ENCODE measurements at regions of chr6 and their contacts with region 1.

Region 1: GRCh38 chr6:147506704-147507114 is 1.8 kb upstream of the SAMD5 start:
- DNase-seq: peak; percentile 76
- H3K4me3 ChIP-seq: peak overlapping the region; percentile 38 to 58 (median 56)
- H3K27ac ChIP-seq: no peak overlapping the region
- H3K4me1 ChIP-seq: peaks cover 0 to 30% (median 23%) of the 10 kb centered on the region in 4 donors
- H3K27me3 ChIP-seq: peaks cover 0 to 19% (median 0%) of the 10 kb centered on the region in 3 donors
- CTCF ChIP-seq: peak; percentile 59 to 84 (median 78)
- EP300 ChIP-seq: no peak
- POLR2A ChIP-seq: no peak

Region 2: DNA sequence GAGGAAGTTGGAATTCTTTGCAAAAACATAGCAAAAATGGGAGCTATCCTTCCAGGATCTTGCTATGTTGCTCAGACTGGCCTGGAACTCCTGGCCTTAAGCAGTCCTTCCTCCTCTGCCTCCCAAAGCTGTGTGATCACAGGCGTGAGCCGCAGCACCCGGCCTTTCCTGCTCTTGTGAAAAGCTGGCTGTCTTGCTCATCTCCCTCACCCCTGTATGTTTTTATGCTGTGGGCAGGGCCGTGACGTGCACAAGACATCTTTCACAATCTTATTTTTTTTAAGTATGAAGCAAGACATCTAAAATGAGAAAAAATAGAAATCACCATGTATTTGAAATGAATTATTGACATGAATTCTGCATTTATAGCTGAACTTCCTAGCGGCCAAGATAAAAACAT is 112.2 kb after region 1 on chr6:
- intact Hi-C with region 1: no loop called
- DNase-seq: no peak
- H3K4me3 ChIP-seq: no peak overlapping the region
- H3K27ac ChIP-seq: no peak overlapping the region
- H3K4me1 ChIP-seq: peaks cover 0 to 7% (median 0%) of the 10 kb centered on the region in 4 donors
- H3K27me3 ChIP-seq: no peaks in the 10 kb centered on the region
- CTCF ChIP-seq: no peak
- EP300 ChIP-seq: no peak
- POLR2A ChIP-seq: no peak

Region 3: GRCh38 chr6:147950623-147950987 is 443.9 kb after region 1 on chr6:
- intact Hi-C with region 1: loop called (anchors 10 kb)
- DNase-seq: no peak
- H3K4me3 ChIP-seq: no peak overlapping the region
- H3K27ac ChIP-seq: peak overlapping the region in 3 of 4 donors; percentile 23 to 39 (median 25)
- H3K4me1 ChIP-seq: peaks cover 0 to 19% (median 5%) of the 10 kb centered on the region in 4 donors
- H3K27me3 ChIP-seq: no peaks in the 10 kb centered on the region
- CTCF ChIP-seq: no peak
- EP300 ChIP-seq: no peak
- POLR2A ChIP-seq: no peak

Region 4: GRCh38 chr6:148166339-148166968 is 659.7 kb after region 1 on chr6:
- intact Hi-C with region 1: loop called (anchors 1 kb)
- DNase-seq: no peak
- H3K4me3 ChIP-seq: no peak overlapping the region
- H3K27ac ChIP-seq: no peak overlapping the region
- H3K4me1 ChIP-seq: no peaks in the 10 kb centered on the region
- H3K27me3 ChIP-seq: no peaks in the 10 kb centered on the region
- CTCF ChIP-seq: peak; percentile 24 to 74 (median 56)
- EP300 ChIP-seq: no peak
- POLR2A ChIP-seq: no peak

Region 5: DNA sequence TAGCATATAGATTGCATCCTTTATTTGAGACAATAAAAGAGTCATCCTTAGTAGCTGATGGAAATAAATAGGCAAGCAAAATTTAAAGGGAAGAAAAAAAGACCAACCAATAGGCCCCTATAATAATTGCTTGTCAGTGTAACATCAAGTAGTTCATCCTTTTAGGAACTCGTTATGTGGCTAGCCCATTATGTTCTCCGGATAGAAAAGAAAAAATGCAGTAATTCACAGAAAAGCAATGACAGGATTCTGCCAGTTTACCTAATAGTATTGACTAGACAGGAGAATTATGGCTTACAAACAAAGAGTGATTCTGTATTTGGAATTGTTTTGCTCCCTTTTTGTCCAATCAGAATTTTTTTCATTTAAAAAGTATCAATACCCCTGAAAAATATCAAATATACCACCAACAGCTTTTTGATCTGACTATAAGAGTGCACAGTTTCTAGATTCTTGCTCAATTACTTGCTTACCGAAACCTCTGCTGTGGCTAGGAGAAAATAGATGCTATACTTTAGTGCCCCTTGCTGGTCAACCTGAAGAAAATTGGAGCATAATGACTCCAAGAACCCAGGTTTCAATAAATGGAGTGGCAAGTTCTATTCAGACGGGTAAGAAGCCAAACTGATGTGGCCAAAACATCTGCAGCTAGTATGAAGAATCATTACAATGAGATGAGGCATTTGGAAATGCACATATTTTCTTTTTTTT is 744.4 kb after region 1 on chr6:
- intact Hi-C with region 1: loop called (anchors 5 kb)
- DNase-seq: no peak
- H3K4me3 ChIP-seq: no peak overlapping the region
- H3K27ac ChIP-seq: no peak overlapping the region
- H3K4me1 ChIP-seq: peaks cover 0 to 11% (median 4%) of the 10 kb centered on the region in 4 donors
- H3K27me3 ChIP-seq: no peaks in the 10 kb centered on the region
- CTCF ChIP-seq: peak in 3 of 4 experiments; percentile 44 to 53 (median 49)
- EP300 ChIP-seq: no peak
- POLR2A ChIP-seq: no peak

Measured in sigmoid colon (tissue), 7 donors.